Activated T-helper 1 cell treated with anti-CD3 and anti-CD28 coated beads, Interleukin-12 subunit alpha, Interleukin-12 subunit beta, Interleukin-2, Interleukin-4 antibody, amounts not matched to agents 30 ng/mL and 10 ng/mL and 1 ng/mL, durations not matched to agents 14 hours and 24 hours and 36 hours (primary cell): ENCODE measurements at regions of chr4 and their contacts with region 1.

Region 1: GRCh38 chr4:121112530-121112929 is 40.2 kb upstream of the NDNF start:
- DNase-seq: no peak
- H3K4me3 Mint-ChIP-seq: no peak overlapping the region
- H3K27ac Mint-ChIP-seq: no peak overlapping the region
- H3K4me1 Mint-ChIP-seq: peaks cover 21% of the 10 kb centered on the region
- H3K27me3 Mint-ChIP-seq: peaks cover 11% of the 10 kb centered on the region

Region 2: DNA sequence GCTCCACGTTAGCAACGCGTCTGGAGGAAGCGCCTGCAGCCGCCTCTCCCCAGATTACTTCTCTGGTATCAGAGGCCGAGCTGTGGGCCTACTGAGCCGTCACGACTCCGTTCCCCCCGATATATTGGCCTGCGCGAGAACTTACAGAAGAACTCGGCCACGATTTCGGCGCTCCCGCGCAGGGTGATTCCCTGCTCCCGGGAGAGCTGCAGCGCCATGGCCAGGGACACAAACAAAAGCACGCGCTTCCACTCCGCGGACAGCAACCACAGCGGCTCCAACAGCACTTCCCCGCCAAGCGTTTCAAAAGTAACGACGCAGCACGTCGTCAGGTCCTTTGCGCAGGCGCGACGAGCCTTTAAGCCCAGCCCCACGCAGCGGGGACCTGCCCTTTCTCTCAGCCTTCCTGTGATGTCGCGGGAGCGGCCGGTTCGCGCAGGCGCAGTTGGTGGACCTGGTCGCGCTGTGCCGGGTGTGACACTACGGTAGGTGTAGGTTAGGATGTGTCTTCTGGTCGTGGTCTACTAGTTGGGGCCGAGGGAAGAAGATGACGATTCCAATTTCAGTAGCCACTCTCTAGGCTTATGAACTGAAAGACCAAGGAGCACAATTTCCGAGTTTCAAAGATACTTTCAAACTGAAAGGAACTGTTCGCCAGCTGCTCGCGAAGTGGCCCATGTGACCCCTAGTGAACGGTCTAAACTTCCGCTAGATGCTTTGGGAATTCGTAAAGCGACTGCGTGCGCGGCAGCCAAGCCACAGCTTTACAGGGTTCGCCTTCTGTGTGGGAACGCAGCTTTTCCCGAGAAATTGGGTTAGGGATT is 1045.8 kb before region 1 on chr4 and contains the start of gene MAD2L1:
- intact Hi-C with region 1: loop called (anchors 2 kb)
- DNase-seq: peak; percentile 98
- H3K4me3 Mint-ChIP-seq: peak within 1 kb of the TSS; percentile 99
- H3K27ac Mint-ChIP-seq: peak within 1 kb of the TSS; percentile 100
- H3K4me1 Mint-ChIP-seq: peaks cover 83% of the 10 kb centered on the region
- H3K27me3 Mint-ChIP-seq: peaks cover 4% of the 10 kb centered on the region
- total RNA-seq, gene MAD2L1: 63.3 and 69.0 TPM in 2 replicates

Region 3: DNA sequence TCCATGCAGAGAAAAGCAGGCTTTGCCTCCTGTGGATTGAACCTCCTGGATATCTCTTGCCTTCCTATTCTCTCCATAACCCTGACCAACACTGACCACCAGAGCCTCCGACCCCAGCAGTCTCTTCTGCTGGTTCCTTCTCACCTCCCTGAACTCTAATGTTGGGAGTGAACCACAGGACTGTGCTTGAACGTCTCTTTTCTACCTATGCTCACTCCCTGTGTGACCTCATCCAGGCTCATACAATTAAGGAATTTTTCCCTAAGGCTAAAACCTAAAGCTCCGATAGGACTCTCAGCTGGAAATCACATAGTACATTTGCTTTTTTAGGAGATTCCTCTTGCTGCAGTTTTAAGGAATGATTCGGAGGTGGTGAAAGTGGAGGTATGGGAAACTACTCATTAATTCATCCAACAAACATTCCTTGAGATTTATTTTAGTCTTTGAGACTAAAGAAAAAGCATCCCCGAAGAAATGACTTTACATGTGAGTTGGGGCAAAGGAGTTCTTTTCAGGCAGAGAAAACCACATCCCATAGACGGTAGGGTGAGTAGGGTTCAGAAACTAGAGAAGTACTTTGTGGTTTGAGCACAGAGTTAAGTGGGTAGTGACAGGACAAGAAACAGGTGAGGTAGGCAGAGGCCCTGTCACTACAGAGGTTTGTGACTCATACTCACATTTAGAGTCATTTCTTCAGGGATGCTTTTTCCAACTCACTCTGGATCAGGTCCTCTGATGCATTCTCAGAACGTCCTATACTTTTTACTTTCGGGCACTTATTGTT is 71.0 kb before region 1 on chr4:
- intact Hi-C with region 1: loop called (anchors 1 kb)
- DNase-seq: peak; percentile 6
- H3K4me3 Mint-ChIP-seq: no peak overlapping the region
- H3K27ac Mint-ChIP-seq: peak overlapping the region; percentile 21
- H3K4me1 Mint-ChIP-seq: peaks cover 16% of the 10 kb centered on the region
- H3K27me3 Mint-ChIP-seq: peaks cover 41% of the 10 kb centered on the region

Region 4: GRCh38 chr4:121139533-121140222 is 27.1 kb after region 1 on chr4:
- intact Hi-C with region 1: loop called (anchors 1 kb)
- DNase-seq: no peak
- H3K4me3 Mint-ChIP-seq: peak overlapping the region; percentile 31
- H3K27ac Mint-ChIP-seq: peak overlapping the region; percentile 69
- H3K4me1 Mint-ChIP-seq: peaks cover 41% of the 10 kb centered on the region
- H3K27me3 Mint-ChIP-seq: no peaks in the 10 kb centered on the region

Region 5: GRCh38 chr4:121182296-121182695 is 69.8 kb after region 1 on chr4:
- intact Hi-C with region 1: loop called (anchors 2 kb)
- DNase-seq: peak; percentile 34
- H3K4me3 Mint-ChIP-seq: peak overlapping the region; percentile 82
- H3K27ac Mint-ChIP-seq: peak overlapping the region; percentile 93
- H3K4me1 Mint-ChIP-seq: peaks cover 72% of the 10 kb centered on the region
- H3K27me3 Mint-ChIP-seq: peaks cover 2% of the 10 kb centered on the region

Region 6: DNA sequence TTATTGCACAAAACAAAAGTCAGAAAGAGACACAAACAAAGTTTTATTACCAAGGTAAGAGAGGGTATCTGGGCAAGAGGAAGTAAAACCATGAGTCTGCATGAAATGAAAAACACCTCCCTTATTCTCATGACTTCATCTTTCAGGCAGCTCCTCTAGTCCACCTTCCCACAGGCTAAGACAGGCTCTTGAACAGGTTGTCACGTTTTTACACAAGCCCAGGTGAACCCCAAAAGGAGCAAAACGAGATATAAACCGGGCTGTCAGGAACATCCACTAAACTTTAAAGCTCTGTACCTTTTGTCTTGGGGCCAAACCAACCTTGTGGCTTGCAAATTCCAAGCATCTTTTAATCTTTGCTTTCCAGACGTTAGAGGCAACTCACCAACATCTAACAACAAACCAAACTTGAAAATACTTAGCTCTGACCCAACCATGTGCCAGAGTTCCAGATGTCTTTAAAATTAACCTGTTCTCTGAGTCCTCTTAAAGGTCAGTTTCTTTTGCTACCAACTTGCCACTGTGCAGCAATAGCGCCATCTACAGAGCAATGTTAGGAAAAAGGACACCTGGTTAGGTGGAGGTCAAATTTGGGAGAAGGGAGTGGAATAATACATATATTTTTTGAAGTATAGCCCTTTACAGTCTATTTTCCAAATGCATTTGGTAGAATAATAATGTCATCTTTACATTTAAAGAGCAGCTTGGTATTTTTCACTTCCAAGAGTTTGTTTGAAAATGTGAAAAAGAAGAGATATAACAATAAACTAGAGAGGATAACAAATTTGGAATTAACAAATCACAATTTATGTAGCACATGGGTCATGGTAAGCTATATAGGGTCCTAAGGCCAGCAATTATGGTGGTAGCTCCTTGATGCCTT is 195.2 kb after region 1 on chr4:
- intact Hi-C with region 1: loop called (anchors 5 kb)
- DNase-seq: peak; percentile 27
- H3K4me3 Mint-ChIP-seq: no peak overlapping the region
- H3K27ac Mint-ChIP-seq: peak overlapping the region; percentile 25
- H3K4me1 Mint-ChIP-seq: peaks cover 16% of the 10 kb centered on the region
- H3K27me3 Mint-ChIP-seq: peaks cover 14% of the 10 kb centered on the region

Region 7: DNA sequence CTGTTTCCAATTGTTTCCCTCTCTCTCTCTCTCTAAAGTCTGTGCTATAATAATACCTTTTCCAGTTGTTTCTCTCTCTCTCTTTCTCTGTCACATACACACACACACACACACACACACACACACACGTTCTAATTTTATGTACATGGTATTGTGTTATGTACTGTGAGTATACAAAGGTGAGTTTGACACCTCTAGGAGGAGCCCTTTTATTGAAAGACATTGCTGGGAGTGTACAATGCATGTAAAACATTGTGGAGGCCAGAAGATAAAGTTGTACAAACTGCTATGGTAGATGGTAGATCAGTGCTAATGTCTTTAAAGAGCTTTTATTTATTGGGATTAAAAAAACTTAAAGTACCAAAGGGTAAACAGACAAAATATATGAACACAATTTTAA is 1093.2 kb after region 1 on chr4:
- intact Hi-C with region 1: no loop called
- DNase-seq: no peak
- H3K4me3 Mint-ChIP-seq: no peak overlapping the region
- H3K27ac Mint-ChIP-seq: no peak overlapping the region
- H3K4me1 Mint-ChIP-seq: no peaks in the 10 kb centered on the region
- H3K27me3 Mint-ChIP-seq: no peaks in the 10 kb centered on the region